ENCODE measurements at regions of chr14 and their contacts with region 1.

Region 1: GRCh38 chr14:104768437-104769323 is 15.7 kb downstream of the SIVA1 start:
- DNase-seq: peak; percentile 95
- ATAC-seq: peak; percentile 93

Region 2: GRCh38 chr14:104786091-104786586 is 17.5 kb after region 1 on chr14:
- intact Hi-C with region 1: no loop called
- DNase-seq: no peak
- ATAC-seq: peak; percentile 68

Region 3: DNA sequence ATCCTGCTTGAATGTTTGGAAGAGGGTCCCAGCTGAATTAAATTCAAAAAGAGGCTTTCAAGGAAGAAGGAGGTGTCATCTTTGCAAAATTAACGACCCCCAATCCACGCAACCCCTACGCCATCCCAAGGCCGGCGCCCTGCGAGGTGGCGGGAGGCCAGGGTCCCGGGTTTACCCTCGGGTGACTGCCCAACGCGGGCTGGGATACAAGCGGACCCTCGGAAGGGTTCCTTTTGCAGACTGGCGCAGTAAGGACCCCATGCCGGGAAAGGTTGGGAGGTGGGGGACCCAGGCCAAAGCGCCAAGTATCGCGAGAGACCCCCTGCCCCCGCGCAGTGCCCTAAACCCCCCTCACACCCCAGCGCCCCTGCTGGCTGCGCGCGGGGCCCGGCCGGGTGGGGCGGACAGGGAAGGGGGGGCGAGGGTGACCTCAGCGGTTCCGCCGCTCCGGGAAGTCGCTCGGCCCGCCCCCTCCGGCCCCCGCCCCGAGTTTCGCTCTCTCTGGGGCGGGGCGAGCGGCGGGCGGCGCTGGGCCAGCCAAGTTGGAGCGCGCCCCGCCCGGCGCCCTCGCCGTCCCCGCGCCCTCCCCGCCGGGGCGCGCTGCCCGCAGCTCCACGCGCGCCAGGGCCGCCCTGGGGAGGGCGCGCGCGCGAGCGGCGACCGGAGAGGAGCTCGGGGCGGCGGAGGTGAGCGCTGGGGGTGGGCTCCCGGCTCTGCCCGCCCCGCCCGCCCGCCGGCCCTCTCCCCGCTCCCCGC is 31.5 kb after region 1 on chr14:
- intact Hi-C with region 1: no loop called
- DNase-seq: peak; percentile 93
- ATAC-seq: peak; percentile 86

Region 4: GRCh38 chr14:104820669-104821228 is 52.1 kb after region 1 on chr14:
- intact Hi-C with region 1: loop called (anchors 5 kb)
- DNase-seq: peak; percentile 69
- ATAC-seq: peak; percentile 36

Region 5: GRCh38 chr14:105439691-105440553 is 671.2 kb after region 1 on chr14:
- intact Hi-C with region 1: no loop called
- DNase-seq: no peak
- ATAC-seq: no peak

Measured in sciatic nerve (tissue), 2 donors.